Breast epithelium (tissue), 4 donors: ENCODE measurements at regions of chrX and their contacts with region 1.

Region 1: DNA sequence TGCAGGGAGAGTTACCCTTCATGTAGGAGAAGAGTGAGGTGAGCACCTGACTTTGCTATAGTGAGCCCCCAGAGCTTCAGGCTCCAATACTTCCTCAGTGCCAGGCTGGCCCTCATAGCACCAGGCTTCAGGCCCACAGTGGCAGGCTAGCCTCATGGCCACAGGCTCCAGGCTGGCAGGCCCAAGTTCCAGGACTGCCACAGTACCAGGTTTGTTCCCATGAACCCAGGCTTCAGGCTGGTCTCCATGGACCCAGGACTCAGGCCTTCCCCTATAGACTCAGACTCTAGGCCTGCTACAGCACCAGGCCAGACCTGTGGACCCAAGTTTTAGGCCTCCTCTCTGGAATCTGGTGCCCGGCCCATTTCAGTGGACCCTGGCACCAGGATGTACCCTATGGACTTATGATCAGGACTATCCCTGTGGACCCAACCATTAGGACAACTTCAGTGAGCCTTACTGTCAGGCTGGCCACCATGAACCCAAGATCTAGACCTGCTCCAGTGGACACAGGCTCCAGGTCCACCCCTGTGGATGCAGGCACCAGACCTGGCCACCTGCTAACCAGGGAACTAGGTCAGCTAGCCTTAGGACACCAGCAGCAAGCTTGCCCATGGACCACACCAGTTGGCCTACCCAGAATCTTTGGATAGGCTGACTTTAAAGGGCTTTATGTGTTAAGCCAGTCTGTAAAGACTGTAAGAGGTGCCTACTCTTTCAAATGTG is 658.2 kb downstream of the KLHL13 start:
- DNase-seq: no peak
- H3K4me3 ChIP-seq: no peak overlapping the region
- H3K27ac ChIP-seq: no peak overlapping the region
- H3K4me1 ChIP-seq: no peaks in the 10 kb centered on the region
- H3K27me3 ChIP-seq: no peaks in the 10 kb centered on the region
- CTCF ChIP-seq: no peak
- POLR2A ChIP-seq: no peak

Region 2: DNA sequence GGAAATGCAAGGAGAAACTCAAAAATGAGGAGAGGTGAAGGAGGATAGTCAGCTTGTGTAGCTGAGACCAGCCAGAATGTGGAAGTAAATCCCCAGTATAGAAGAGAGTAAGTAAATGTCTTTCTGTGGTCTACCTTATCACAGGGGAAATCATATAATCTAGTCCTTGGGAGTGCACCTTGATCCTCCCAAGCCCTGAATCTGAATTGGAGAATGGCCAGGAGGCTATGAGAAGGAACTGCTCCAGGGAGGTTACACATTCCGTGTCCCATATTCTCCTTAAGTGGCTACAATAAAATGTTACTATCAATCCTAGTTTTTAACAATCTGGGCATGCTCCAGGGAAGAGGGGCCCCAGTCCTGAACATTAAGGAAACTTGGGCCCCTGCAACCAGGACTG is 1277.1 kb before region 1 on chrX:
- intact Hi-C with region 1: loop called (anchors 10 kb)
- DNase-seq: no peak
- H3K4me3 ChIP-seq: no peak overlapping the region
- H3K27ac ChIP-seq: no peak overlapping the region
- H3K4me1 ChIP-seq: no peaks in the 10 kb centered on the region
- H3K27me3 ChIP-seq: peaks cover 0 to 14% of the 10 kb centered on the region in 2 donors
- CTCF ChIP-seq: no peak
- POLR2A ChIP-seq: no peak